HEK293T (cell line): ENCODE measurements at regions of chr16 and their contacts with region 1.

Region 1: DNA sequence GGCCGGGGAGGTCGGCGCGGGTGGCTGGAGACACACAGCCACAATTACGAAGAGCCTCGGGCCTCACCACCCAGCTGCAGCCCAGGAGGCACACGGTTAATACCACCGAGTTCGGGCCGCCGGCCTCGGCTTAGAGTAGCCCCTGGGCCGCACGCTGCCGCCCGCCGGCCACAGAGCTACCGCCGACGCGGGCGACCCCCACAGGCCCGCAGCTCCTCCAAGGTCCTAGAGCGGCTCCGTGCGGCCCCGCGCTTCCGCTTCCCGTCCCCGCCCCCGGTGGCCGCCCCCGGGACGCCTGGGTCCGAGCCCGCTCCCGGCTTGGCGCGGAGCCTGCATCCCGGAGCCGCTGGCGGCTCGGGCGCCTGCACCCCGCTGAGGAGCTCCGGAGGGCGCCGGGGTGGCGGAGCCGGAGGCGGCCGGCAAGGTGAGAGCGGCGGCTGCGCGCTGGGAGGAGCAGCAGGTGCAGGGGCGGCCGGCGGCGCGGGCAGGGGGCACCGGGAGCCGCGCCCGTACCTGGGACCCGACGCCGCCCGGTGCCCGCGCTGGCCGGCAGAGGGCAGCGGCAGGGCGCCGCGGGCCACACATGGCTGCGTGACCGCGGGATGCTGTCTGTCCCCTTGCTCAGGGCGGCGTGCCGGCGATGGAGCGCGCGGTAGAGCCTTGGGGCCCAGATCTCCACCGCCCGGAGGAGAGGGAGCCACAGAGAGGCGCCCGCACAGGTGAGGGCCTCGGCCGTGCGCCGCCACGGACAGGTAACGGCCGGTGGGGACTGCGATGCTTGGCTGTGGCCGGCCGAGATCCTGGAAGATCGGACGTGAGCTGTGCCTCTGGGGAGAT is at the start of gene ZNF48:
- DNase-seq: peak; percentile 89

Region 2: GRCh38 chr16:30355144-30355894 is 40.1 kb before region 1 on chr16 and contains the start of gene CD2BP2:
- CTCF ChIA-PET with region 1: no interaction called
- POLR2A ChIA-PET with region 1: interaction called, 18 read pairs
- DNase-seq: peak; percentile 99

Region 3: GRCh38 chr16:30370444-30371247 is 24.7 kb before region 1 on chr16 and contains the start of gene TBC1D10B:
- CTCF ChIA-PET with region 1: interaction called, 6 read pairs
- POLR2A ChIA-PET with region 1: interaction called, 75 read pairs
- DNase-seq: peak; percentile 98

Region 4: DNA sequence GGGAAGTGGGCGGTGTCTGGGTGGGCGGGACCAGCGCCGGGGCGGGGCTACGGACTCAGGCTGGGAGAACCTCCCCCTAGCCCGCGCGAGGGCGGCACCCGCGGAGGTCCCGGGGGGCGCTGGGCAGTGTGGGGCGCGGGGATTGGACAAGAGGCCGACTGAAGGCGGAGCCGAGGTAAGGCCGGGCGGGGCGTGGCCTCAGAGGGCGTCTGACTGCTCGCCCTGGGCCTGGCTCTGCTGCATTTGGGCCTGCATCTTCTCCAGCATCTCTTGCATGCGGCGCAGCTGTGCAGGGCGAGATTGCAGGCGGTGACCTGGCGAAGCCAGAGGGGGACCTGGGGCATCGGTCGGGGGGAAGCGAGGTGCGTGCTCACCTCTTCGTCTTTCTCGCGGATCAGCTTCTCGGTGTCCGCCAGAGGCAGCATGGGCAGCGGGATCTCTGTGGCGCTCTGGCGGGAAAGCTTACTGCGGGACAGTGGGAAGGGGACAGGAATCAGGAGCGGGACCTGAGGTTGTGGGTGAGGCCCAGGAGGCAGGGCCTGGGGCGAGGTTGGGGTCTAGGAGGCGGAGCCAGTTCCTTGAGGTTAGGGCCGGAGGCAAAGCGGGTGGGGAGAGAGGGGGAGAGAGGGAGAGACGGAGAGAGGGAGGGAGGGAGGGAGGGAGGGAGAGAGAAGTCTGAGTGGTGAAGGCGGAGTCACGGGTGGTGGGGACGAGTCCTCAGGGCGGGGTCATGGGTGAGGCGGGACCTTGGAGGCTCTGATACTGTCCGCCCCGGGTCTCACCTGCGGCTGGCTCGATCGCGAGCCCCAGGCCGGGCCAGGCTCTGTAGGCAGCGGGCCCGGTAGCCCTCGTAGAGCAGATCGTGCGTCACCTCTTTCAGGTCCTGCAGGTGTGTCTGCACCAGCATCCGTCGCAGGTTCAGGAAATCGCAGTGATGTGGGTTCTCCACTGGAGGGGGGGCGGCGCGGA is 16.9 kb before region 1 on chr16:
- CTCF ChIA-PET with region 1: interaction called, 6 read pairs
- POLR2A ChIA-PET with region 1: interaction called, 75 read pairs
- DNase-seq: peak; percentile 100

Region 5: DNA sequence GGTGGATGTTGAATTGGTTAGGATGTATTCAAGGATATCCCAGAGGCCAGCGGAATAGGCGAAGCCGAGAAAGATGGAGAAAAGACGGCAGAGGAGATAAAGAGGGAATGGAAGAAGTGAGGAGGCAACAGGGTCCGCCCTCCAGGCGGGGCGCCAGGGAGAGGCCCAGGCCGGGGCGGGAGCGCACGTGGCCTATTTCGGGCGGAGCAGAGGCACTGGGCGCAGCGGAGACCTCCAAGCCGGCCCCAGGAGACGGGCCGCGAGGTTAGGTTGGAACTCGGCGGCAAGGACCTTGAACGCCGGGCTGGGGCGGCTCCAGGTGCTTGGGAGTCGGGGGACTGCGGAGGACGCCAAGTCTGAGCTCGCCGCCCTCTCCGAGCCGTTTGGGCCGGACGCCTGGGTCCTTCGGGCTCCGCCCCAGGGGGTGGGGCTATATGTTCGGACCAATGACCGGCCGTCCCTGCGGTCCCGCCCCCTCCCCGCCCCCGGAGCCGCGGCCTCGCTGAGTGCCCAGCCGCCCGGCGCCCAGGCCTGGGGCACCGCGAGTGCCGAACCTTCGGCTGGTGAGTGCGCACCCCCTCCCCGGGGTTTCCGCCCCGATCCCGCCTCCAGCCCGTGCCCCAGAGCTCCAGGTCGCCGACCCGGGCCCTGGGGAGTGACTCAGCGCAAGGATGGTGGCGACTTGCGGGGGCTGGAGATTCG is 11.9 kb after region 1 on chr16 and contains the start of gene ZNF771:
- CTCF ChIA-PET with region 1: interaction called, 15 read pairs
- POLR2A ChIA-PET with region 1: interaction called, 97 read pairs
- DNase-seq: peak; percentile 94

Region 6: GRCh38 chr16:30445408-30446202 is 50.2 kb after region 1 on chr16 and contains the start of gene SEPHS2:
- CTCF ChIA-PET with region 1: no interaction called
- POLR2A ChIA-PET with region 1: no interaction called
- DNase-seq: peak; percentile 98

Region 7: DNA sequence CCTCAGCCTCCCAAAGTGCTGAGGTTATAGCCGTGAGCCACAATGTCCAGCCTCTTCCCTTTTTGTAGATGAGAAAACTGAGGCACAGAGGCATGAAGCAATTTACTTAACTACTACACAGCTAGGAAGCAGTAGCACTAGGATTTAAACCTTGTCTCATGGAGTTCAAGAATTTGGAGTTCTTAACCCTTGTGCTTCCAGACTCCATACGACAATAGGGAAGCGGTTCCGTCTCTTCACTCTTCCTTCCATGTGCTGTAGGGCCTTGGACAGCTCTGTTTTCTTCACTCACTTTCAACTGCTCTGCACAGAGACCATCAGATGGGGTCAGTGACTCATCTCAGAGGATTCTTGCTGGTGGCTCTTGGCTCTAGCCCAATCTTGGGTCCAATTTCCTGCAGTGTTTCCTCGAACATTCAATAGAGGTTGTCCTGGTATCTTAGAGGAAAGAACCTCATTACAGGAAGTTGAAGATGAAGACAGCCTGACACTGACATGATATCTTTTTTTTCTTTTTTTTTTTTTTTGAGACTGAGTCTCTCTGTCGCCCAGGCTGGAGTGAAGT is 96.5 kb after region 1 on chr16:
- CTCF ChIA-PET with region 1: no interaction called
- POLR2A ChIA-PET with region 1: no interaction called
- DNase-seq: peak; percentile 22